BJ (cell line): ENCODE measurements at regions of chr12 and their contacts with region 1.

Region 1: DNA sequence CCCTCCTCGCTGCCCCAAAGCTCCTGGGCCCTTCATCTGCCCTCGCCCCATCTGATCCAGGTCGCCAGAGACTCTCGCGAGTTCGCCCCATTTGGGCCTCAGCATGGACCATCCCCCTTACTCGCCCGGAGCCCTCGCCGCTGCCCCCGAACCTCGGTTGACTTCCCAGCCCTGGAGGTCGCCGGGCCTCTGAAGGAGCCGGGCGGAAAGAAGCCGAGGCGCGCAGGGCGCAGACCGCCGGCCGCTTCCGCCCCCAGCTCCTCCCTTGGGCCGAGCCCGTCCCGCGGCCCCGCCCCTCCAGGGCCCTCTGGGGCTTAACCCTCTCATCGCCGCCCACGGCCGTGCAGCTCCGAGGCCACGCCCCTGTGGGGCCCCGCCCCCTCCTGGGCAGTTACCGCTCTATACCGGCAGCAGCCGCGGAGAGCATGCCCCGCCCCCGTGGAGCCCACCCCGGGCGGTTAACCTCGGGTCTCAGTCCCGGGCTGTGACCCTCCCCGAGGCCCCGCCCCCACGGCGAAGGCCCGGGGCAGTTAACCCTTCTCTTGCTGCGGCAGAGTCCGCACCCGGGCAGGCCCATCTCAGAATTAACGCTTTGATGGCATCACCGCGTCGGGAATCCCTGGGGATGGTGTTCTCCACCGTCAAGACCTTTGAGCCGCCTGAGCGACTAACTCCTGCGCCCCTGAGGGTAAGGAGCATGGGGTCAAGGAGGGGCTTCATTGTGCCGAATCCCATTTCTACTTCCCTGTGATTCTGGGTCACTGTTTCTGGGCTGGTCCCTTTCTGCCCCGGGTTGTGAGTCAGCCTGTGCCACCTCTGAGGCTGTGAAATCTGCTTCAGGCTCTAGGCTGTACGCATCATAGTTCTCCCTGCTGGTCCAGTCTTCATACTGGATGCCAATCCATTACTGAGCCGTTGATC is at the start of gene SPSB2:
- DNase-seq: no peak
- H3K4me3 ChIP-seq: peak within 1 kb of the TSS; percentile 65
- H3K27me3 ChIP-seq: no peaks in the 10 kb centered on the region
- CTCF ChIP-seq: no peak
- polyA plus RNA-seq, gene SPSB2: 5.0 and 7.3 TPM in 2 replicates

Region 2: DNA sequence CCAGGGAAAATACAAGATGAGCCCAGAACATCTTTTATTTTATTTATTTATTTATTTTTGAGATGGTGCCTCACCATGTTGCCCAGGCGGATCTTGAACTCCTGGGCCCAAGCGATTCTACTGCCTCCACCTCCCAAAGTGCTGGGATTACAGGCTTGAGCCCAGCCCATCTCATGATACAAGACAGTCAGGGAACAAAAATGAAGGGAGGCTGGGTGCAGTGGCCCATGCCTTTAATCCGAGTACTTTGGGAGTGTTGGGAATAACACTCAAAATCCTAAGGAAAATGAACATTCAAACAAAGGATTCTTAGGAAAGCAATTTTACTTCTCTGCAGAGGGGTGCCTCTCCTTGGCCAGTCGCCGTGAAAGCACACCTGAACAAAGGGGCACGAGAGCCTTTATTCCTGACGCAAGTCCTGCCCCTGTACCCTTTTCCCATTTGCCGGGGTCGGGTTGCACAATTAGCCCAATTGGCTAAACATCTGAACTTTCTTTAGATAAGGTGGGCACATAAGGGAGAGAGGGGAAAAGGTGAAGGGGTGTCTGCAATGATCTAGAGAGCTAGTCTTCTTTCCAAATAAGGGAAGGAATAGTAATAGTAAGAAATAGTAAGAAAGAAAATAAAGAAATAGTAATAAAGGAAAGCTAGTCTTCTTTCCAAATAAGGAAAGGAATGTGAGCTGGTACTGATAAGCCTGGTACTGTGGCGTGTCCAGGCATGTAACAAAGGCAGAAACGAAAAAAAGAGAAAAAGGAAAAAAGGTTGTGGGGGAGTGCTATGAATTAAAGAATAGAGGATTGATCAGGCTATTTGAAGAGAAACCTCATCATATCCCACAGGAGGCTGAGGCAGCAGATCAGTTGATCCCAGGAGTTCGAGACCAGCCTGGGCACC is 366.0 kb before region 1 on chr12:
- CTCF ChIA-PET with region 1: no interaction called
- POLR2A ChIA-PET with region 1: no interaction called
- DNase-seq: no peak
- H3K4me3 ChIP-seq: no peak overlapping the region
- H3K27me3 ChIP-seq: no peaks in the 10 kb centered on the region
- CTCF ChIP-seq: no peak

Region 3: GRCh38 chr12:6533923-6534694 is 339.2 kb before region 1 on chr12 and contains the start of gene GAPDH:
- CTCF ChIA-PET with region 1: no interaction called
- POLR2A ChIA-PET with region 1: no interaction called
- DNase-seq: peak; percentile 77
- H3K4me3 ChIP-seq: peak within 1 kb of the TSS; percentile 88
- H3K27me3 ChIP-seq: no peaks in the 10 kb centered on the region
- CTCF ChIP-seq: no peak
- polyA plus RNA-seq, gene GAPDH: 12,114 and 18,709 TPM in 2 replicates

Region 4: GRCh38 chr12:6662906-6663742 is 210.2 kb before region 1 on chr12 and contains the start of gene ING4:
- CTCF ChIA-PET with region 1: no interaction called
- POLR2A ChIA-PET with region 1: no interaction called
- DNase-seq: peak; percentile 98
- H3K4me3 ChIP-seq: peak within 1 kb of the TSS; percentile 75
- H3K27me3 ChIP-seq: no peaks in the 10 kb centered on the region
- CTCF ChIP-seq: no peak
- polyA plus RNA-seq, gene ING4: 43.0 and 61.0 TPM in 2 replicates

Region 5: GRCh38 chr12:6861391-6861790 is 12.0 kb before region 1 on chr12:
- CTCF ChIA-PET with region 1: interaction called, 112 read pairs
- POLR2A ChIA-PET with region 1: no interaction called
- DNase-seq: no peak
- H3K4me3 ChIP-seq: no peak overlapping the region
- H3K27me3 ChIP-seq: no peaks in the 10 kb centered on the region
- CTCF ChIP-seq: no peak

Region 6: DNA sequence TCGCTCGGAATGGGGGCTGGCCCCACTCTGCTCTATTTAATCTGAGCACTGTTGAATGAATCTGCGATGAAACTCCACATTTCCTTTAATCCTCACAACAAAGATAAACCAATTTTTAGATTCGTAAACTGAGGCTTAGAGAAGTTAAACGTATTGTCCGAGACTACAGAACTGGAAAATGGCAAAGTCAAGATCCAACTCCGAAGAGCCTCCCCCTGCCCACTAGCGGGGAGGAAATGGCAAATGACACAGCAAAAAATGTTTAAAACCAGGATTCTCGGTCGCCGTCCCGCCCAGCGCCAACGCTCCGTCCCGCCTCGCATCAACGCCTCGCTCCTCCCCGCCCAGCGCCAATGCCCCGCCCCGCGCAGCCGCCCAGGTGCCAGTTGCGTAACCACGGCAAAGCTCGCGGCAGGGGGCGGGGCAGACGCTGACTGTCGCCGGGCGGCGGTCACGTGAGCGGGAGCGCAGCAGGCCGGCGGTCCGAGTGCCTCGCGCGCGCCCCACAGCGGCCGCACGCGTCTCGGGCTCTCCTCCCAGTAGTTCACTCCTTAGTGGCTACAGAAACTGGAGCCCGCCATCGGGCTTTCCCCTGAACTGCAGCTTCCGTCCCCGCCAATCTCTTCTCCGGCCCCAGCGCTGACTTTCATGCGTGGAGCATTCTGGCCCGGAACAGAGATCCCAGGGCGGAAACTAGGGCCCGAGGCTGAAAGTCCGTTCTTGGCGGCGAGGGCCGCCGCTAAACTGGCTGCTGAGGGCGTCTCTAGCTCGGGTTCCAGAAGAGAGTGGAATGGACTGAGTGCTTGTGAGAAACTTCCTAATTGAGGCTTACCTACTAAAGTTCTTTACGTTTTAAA is 17.7 kb after region 1 on chr12:
- CTCF ChIA-PET with region 1: interaction called, 42 read pairs
- POLR2A ChIA-PET with region 1: interaction called, 7 read pairs
- DNase-seq: peak; percentile 74
- H3K4me3 ChIP-seq: peak overlapping the region; percentile 23
- H3K27me3 ChIP-seq: no peaks in the 10 kb centered on the region
- CTCF ChIP-seq: peak; percentile 58

Region 7: GRCh38 chr12:6927379-6928024 is 54.1 kb after region 1 on chr12 and contains the start of gene ATN1:
- CTCF ChIA-PET with region 1: interaction called, 43 read pairs
- POLR2A ChIA-PET with region 1: interaction called, 4 read pairs
- DNase-seq: no peak
- H3K4me3 ChIP-seq: peak within 1 kb of the TSS; percentile 55
- H3K27me3 ChIP-seq: no peaks in the 10 kb centered on the region
- CTCF ChIP-seq: no peak
- polyA plus RNA-seq, gene ATN1: 13.0 and 15.9 TPM in 2 replicates

Region 8: GRCh38 chr12:6944381-6945186 is 71.2 kb after region 1 on chr12:
- CTCF ChIA-PET with region 1: interaction called, 21 read pairs
- POLR2A ChIA-PET with region 1: no interaction called
- DNase-seq: peak; percentile 57
- H3K4me3 ChIP-seq: peak overlapping the region; percentile 67
- H3K27me3 ChIP-seq: no peaks in the 10 kb centered on the region
- CTCF ChIP-seq: peak; percentile 87